Psoas muscle (tissue), 8 donors: ENCODE measurements at regions of chr3 and their contacts with region 1.

Region 1: GRCh38 chr3:149480325-149481017 is 6.0 kb downstream of the TM4SF4 start:
- DNase-seq: peak; percentile 79 to 83
- ATAC-seq: peak; percentile 96 to 99 (median 97)
- H3K4me3 ChIP-seq: no peak overlapping the region
- H3K27ac ChIP-seq: peak overlapping the region; percentile 64
- H3K4me1 ChIP-seq: peaks cover 13% of the 10 kb centered on the region
- H3K27me3 ChIP-seq: no peaks in the 10 kb centered on the region
- CTCF ChIP-seq: peak; percentile 92

Region 2: DNA sequence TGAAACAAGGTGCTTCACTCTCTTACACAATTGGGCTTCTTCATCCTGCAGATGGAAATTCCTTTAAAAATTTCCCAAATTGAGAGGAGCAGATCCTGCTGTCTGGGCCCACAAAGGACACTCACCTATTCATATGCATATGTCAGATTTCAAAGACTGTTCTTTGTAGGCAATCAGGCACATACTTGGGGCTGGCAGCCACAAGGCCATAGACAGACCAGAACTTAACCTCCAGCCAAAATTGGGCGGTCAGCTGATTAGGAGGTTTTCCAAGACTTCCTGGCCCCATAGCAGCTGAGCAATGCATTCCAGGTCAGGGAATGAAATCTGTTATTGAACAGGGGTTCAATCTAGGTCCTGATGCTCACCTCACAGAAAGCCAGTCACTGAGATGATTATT is 366.0 kb before region 1 on chr3:
- intact Hi-C with region 1: loop called in 1 of 2 experiments (anchors 10 kb)
- DNase-seq: no peak
- ATAC-seq: no peak
- H3K4me3 ChIP-seq: no peak overlapping the region
- H3K27ac ChIP-seq: no peak overlapping the region
- H3K4me1 ChIP-seq: no peaks in the 10 kb centered on the region
- H3K27me3 ChIP-seq: no peaks in the 10 kb centered on the region
- CTCF ChIP-seq: no peak

Region 3: GRCh38 chr3:149352556-149352955 is 127.9 kb before region 1 on chr3:
- intact Hi-C with region 1: loop called (anchors 5 kb)
- DNase-seq: peak; percentile 50 to 63
- ATAC-seq: peak; percentile 77 to 94 (median 86)
- H3K4me3 ChIP-seq: no peak overlapping the region
- H3K27ac ChIP-seq: no peak overlapping the region
- H3K4me1 ChIP-seq: no peaks in the 10 kb centered on the region
- H3K27me3 ChIP-seq: no peaks in the 10 kb centered on the region
- CTCF ChIP-seq: peak; percentile 61

Region 4: DNA sequence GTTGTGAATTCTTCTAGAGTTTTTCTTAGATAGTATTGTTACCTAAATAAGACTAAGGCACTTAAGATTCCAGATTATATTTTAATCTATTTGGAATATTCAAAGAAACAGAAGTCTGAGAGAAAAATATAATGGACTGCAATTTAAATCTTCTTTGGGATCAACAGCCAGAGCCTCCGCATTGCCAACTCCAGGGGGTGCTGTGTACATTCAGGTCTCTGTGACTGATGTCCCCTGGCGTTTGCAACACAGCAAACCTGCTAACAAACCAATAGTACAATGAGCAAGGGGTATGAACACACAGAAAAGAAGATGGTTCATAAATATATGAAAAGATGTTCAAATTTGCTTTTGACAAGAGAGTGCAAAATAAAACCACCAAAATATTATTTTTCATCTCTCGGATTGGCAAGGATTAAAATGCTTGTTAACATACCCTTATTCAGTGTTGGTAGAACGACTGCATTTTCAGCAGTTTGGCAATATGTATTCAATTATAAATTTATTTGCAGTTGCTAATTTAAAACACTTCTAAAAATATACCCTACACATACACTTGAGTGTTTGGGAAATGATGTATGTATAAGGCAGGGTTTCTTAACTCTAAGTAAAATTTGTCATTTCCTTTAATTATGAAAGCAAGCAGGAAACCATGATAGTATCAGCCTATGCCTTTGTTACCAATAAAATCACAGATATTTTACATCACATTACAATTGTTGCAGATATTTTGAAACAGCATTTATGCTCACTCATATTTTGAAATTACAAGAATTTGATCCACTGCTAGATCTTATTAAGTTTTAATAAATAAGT is 86.9 kb before region 1 on chr3:
- intact Hi-C with region 1: loop called (anchors 2 to 5 kb)
- DNase-seq: peak; percentile 53 to 74
- ATAC-seq: peak; percentile 79 to 92 (median 86)
- H3K4me3 ChIP-seq: no peak overlapping the region
- H3K27ac ChIP-seq: no peak overlapping the region
- H3K4me1 ChIP-seq: peaks cover 5% of the 10 kb centered on the region
- H3K27me3 ChIP-seq: no peaks in the 10 kb centered on the region
- CTCF ChIP-seq: peak; percentile 90

Region 5: GRCh38 chr3:149414557-149415231 is 65.8 kb before region 1 on chr3:
- intact Hi-C with region 1: no loop called
- DNase-seq: no peak
- ATAC-seq: no peak
- H3K4me3 ChIP-seq: no peak overlapping the region
- H3K27ac ChIP-seq: no peak overlapping the region
- H3K4me1 ChIP-seq: no peaks in the 10 kb centered on the region
- H3K27me3 ChIP-seq: no peaks in the 10 kb centered on the region
- CTCF ChIP-seq: no peak

Region 6: GRCh38 chr3:149442851-149443544 is 37.5 kb before region 1 on chr3:
- intact Hi-C with region 1: no loop called
- DNase-seq: no peak
- ATAC-seq: peak; percentile 49 to 75 (median 72)
- H3K4me3 ChIP-seq: no peak overlapping the region
- H3K27ac ChIP-seq: peak overlapping the region; percentile 46
- H3K4me1 ChIP-seq: peaks cover 13% of the 10 kb centered on the region
- H3K27me3 ChIP-seq: no peaks in the 10 kb centered on the region
- CTCF ChIP-seq: no peak

Region 7: DNA sequence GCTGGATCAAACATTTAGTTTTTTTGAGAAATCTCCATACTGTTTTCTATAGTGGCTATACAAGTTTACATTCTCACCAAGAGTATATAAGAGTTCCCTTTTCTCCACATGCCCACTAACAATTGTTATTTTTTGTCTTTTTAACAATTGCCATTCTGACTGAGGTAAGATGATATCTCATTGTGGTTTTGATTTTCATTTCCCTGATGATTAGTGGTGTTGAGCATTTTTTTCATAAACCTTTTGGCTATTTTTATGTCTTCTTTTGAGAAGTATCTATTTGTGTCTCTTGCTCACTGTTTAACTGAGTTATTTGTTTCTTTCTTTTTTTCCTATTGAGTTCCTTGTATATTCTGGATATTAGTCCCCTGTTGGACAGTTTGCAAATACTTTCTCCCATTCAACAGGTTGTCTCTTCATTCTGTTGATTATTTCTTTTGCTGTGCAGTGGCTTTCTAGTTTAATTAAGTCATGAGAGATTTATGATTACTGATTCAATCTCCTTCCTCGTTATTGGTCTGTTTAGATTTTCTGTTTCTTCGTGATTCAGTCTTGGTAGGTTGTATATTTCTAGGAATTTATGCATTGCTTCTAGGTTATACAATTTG is 325.8 kb after region 1 on chr3:
- intact Hi-C with region 1: no loop called
- DNase-seq: no peak
- ATAC-seq: no peak
- H3K4me3 ChIP-seq: no peak overlapping the region
- H3K27ac ChIP-seq: no peak overlapping the region
- H3K4me1 ChIP-seq: no peaks in the 10 kb centered on the region
- H3K27me3 ChIP-seq: no peaks in the 10 kb centered on the region
- CTCF ChIP-seq: no peak